Psoas muscle (tissue), 8 donors: ENCODE measurements at regions of chrX and their contacts with region 1.

Region 1: DNA sequence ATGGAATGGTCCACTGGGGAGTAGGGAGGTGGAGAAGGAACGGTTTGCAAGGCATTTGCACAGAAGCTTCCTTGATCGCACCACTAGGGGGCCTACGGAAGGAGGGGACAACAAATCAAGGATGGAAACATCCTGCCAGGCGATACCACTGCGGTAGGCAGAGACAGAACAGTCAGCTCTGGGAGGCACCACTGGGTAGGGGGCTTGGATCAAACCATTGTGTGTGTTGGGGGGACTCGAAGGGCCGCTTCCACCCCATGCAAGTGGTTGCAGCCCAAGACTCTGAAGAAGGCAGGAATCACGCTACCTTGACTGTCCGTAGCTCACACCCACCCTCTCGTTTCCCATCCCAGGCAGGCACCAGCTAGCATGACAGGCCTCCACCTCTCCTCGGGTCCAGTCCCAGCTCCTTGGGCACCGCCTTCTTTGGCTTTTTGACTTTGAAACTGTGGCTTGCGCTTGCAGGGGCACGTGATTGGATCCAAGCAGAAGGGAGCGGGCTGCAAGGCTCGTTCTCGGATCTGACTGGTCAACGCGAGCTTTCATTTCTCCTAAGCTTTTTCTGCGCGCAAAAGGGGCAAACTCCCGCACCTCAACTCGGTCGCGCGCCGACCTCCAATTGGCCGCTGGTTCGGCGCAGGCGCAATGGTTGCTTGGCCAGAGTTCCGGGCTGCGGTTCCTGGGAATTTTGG is 28.4 kb downstream of the GAGE1 start:
- DNase-seq: no peak
- ATAC-seq: peak; percentile 58 to 76 (median 70)
- H3K4me3 ChIP-seq: peak overlapping the region; percentile 40
- H3K27ac ChIP-seq: no peak overlapping the region
- H3K4me1 ChIP-seq: no peaks in the 10 kb centered on the region
- H3K27me3 ChIP-seq: no peaks in the 10 kb centered on the region
- CTCF ChIP-seq: peak; percentile 36

Region 2: GRCh38 chrX:49754233-49754857 is 127.1 kb after region 1 on chrX:
- intact Hi-C with region 1: loop called (anchors 5 kb)
- DNase-seq: peak; percentile 20 to 56
- ATAC-seq: peak; percentile 64 to 85 (median 76)
- H3K4me3 ChIP-seq: no peak overlapping the region
- H3K27ac ChIP-seq: no peak overlapping the region
- H3K4me1 ChIP-seq: no peaks in the 10 kb centered on the region
- H3K27me3 ChIP-seq: peaks cover 0 to 32% (median 0%) of the 10 kb centered on the region in 3 donors
- CTCF ChIP-seq: peak; percentile 71